Posterior cingulate gyrus (tissue), 11 donors: ENCODE measurements at regions of chr7 and their contacts with region 1.

Region 1: DNA sequence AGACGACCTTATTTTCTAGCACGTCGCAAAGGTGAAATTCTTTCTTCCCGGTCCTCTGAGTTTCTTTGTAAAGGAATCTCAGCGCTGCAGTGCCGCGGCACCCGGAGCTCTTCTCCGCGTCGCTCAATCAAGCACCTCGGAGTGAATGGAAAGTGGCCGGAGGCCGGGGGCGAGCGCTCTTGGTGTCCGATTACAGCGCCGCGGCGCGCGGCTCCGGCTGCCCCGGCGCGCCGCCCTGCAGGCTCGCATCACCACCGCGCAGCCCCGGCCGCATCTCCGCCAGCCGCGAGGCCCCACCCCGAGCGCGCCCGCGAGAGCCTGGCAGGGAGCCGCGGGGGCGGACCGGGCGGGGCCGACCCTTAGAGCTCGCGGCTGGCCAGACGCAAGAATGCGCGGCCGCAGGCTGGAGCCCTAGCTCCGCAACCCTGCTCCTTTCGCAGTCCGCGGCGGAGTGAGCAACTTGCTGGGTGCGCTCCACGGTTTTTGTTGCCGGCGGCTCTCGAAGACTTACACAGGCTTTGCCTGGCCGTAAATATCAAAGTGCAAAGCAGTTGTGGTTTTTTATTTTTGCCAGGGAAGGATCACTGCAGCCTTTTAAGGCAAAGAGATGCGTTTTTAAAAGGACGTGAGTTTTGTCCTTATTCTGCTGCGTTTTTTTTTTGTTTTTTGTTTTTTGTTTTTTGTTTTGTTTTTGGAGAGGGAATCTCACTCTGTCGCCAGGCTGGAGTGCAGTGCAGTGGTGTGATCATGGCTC is at the start of gene SEMA3C:
- DNase-seq: peak; percentile 73 to 98 (median 80)

Region 2: GRCh38 chr7:80699045-80699638 is 219.9 kb before region 1 on chr7:
- intact Hi-C with region 1: loop called (anchors 5 kb)
- DNase-seq: no peak

Region 3: GRCh38 chr7:80826520-80827238 is 92.4 kb before region 1 on chr7:
- intact Hi-C with region 1: loop called (anchors 10 kb)
- DNase-seq: no peak

Region 4: GRCh38 chr7:80960244-80960795 is 41.2 kb after region 1 on chr7:
- intact Hi-C with region 1: no loop called
- DNase-seq: no peak

Region 5: GRCh38 chr7:81410471-81411125 is 491.5 kb after region 1 on chr7:
- intact Hi-C with region 1: no loop called
- DNase-seq: no peak

Region 6: GRCh38 chr7:81457852-81458522 is 538.9 kb after region 1 on chr7:
- intact Hi-C with region 1: loop called (anchors 10 kb)
- DNase-seq: no peak